ENCODE measurements at regions of chr12 and their contacts with region 1.

Region 1: GRCh38 chr12:75322464-75322863 is 7.7 kb downstream of the CAPS2 start:
- DNase-seq: no peak
- ATAC-seq: no peak
- H3K4me3 Mint-ChIP-seq: no peak overlapping the region
- H3K27ac Mint-ChIP-seq: no peak overlapping the region
- H3K4me1 Mint-ChIP-seq: no peaks in the 10 kb centered on the region
- H3K27me3 Mint-ChIP-seq: peaks cover 6% of the 10 kb centered on the region

Region 2: DNA sequence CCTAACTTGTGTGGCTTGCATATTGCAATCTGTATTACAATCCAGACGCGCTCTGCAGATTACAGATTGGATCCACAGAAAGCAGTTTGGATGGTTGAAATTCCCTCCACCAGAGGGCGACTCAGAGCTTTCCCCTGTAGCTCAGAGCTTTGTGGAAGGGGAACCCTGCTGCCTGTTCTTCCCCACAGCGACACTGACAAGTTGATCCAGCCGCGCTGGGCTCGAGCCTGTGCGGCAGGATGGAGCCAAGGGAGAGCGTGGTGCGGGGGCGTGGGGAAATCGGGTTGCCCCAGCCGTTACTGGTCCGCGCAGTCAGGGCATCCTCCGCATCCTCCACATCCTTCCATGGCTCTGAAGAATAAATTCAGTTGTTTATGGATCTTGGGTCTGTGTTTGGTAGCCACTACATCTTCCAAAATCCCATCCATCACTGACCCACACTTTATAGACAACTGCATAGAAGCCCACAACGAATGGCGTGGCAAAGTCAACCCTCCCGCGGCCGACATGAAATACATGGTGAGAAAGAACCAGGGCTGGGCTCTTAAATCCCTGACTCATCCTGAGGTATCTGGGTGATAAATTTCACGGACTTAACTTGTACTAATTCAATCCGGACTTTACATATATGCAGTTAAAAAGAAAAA is 12.0 kb after region 1 on chr12 and contains the start of gene GLIPR1L1:
- CTCF ChIA-PET with region 1: interaction called, 10 read pairs
- POLR2A ChIA-PET with region 1: no interaction called
- intact Hi-C with region 1: no loop called
- DNase-seq: peak; percentile 91
- ATAC-seq: peak; percentile 82
- H3K4me3 Mint-ChIP-seq: peak within 1 kb of the TSS; percentile 61
- H3K27ac Mint-ChIP-seq: no peak within 1 kb of the TSS
- H3K4me1 Mint-ChIP-seq: peaks cover 25% of the 10 kb centered on the region
- H3K27me3 Mint-ChIP-seq: peaks cover 21% of the 10 kb centered on the region
- total RNA-seq, gene GLIPR1L1: not detected

Region 3: GRCh38 chr12:75564398-75564797 is 241.9 kb after region 1 on chr12:
- CTCF ChIA-PET with region 1: no interaction called
- POLR2A ChIA-PET with region 1: no interaction called
- intact Hi-C with region 1: no loop called
- DNase-seq: no peak
- ATAC-seq: no peak
- H3K4me3 Mint-ChIP-seq: no peak overlapping the region
- H3K27ac Mint-ChIP-seq: no peak overlapping the region
- H3K4me1 Mint-ChIP-seq: no peaks in the 10 kb centered on the region
- H3K27me3 Mint-ChIP-seq: peaks cover 12% of the 10 kb centered on the region

Measured in activated CD4-positive, alpha-beta T cell treated with anti-CD3 and anti-CD28 coated beads for 36 hours (primary cell).